ENCODE measurements at regions of chr20 and their contacts with region 1.

Region 1: GRCh38 chr20:2206957-2207769 is 88.6 kb upstream of the TGM3 start:
- DNase-seq: peak; percentile 83
- H3K4me3 ChIP-seq: peak overlapping the region; percentile 76
- H3K27ac ChIP-seq: no peak overlapping the region
- H3K4me1 ChIP-seq: peaks cover 4% of the 10 kb centered on the region
- H3K27me3 ChIP-seq: peaks cover 8% of the 10 kb centered on the region
- CTCF ChIP-seq: peak; percentile 72

Region 2: DNA sequence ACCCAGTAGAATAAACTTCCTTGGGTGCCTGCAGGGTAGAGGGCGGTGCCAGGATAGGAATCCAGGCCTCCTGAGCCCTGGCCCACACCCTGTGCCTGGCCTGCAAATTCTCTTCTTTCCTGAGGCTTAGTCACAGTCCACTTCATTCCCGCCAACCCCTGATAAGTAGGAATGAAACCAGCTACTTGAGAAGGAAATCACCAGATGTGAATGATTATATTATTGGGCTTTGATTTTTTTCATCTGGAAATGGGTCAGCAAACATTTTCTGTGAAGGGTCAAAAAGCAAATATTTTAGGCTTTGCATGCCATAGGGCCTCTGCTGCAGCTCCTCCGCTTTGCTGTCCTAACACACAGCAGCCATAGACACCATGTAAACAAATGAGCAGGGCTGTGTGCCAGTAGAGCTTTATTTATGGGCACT is 55.3 kb before region 1 on chr20:
- intact Hi-C with region 1: no loop called
- DNase-seq: no peak
- H3K4me3 ChIP-seq: no peak overlapping the region
- H3K27ac ChIP-seq: no peak overlapping the region
- H3K4me1 ChIP-seq: no peaks in the 10 kb centered on the region
- H3K27me3 ChIP-seq: no peaks in the 10 kb centered on the region
- CTCF ChIP-seq: no peak

Region 3: DNA sequence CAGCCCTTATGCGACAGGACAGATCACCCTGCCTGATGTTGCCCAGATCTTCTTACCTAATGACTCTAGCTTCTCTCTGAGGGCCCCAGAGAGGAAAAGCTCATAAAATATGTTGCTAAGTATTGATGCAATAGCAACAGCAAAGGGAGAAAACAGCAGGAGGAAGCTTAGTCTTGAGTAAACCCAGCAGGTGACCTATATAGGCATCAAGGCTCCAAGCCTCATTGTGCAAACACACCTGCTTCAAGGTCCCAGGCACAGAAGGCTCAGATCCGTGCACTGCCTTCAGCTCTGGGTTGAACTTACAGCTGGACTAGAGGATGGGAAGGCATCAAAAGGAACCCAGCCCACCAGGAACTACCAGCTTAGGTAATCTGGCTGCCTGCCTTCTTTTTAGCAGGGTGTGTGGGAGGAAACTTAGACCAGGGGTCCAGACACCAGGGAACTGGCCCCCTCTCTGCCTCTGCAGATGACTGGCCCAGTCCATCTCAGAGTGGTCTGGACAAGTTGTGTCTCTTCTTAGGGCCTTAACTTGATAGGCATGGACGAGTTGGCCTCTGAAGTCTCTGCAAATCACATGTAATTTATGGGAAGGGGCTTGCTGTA is 123.0 kb after region 1 on chr20:
- intact Hi-C with region 1: no loop called
- DNase-seq: peak; percentile 64
- H3K4me3 ChIP-seq: no peak overlapping the region
- H3K27ac ChIP-seq: peak overlapping the region; percentile 41
- H3K4me1 ChIP-seq: no peaks in the 10 kb centered on the region
- H3K27me3 ChIP-seq: no peaks in the 10 kb centered on the region
- CTCF ChIP-seq: no peak

Region 4: DNA sequence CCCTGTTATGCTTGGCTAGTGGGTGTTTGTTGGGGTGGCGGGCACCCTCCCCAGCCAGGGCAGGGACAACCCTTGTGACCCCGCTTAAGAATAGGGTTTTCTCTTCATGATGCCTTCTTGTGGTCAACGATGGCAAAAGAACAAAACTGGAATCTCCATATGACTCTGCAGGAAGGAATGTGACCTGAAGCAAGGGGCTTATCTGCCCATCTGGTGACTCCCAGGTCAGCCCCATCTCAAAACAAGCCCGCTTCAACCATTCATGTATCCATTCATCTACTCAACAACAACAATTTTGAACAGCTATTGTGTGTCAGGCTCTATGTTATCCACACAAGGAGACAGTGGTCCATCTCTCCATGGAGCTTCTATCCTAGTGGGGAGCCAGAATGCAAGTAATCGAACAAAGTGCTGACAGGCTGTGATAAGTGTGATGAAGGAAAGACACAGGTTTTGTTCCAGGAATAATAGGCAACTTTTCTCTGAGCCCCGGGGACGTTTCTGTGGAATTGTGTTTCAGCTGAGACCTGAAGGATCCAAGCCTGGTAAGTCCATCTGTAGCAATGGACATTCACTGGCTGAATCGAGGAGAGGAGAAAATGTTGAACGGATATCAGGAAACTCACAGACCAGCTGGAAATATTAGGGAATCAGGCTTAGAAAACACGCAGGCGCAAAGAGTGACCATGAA is 142.8 kb after region 1 on chr20:
- intact Hi-C with region 1: loop called (anchors 2 kb)
- DNase-seq: no peak
- H3K4me3 ChIP-seq: no peak overlapping the region
- H3K27ac ChIP-seq: no peak overlapping the region
- H3K4me1 ChIP-seq: no peaks in the 10 kb centered on the region
- H3K27me3 ChIP-seq: no peaks in the 10 kb centered on the region
- CTCF ChIP-seq: no peak

Region 5: GRCh38 chr20:2451939-2452732 is 245.0 kb after region 1 on chr20:
- intact Hi-C with region 1: loop called (anchors 5 kb)
- DNase-seq: peak; percentile 81
- H3K4me3 ChIP-seq: no peak overlapping the region
- H3K27ac ChIP-seq: no peak overlapping the region
- H3K4me1 ChIP-seq: no peaks in the 10 kb centered on the region
- H3K27me3 ChIP-seq: no peaks in the 10 kb centered on the region
- CTCF ChIP-seq: peak; percentile 86